Sciatic nerve (tissue), 2 donors: ENCODE measurements at regions of chr6 and their contacts with region 1.

Region 1: DNA sequence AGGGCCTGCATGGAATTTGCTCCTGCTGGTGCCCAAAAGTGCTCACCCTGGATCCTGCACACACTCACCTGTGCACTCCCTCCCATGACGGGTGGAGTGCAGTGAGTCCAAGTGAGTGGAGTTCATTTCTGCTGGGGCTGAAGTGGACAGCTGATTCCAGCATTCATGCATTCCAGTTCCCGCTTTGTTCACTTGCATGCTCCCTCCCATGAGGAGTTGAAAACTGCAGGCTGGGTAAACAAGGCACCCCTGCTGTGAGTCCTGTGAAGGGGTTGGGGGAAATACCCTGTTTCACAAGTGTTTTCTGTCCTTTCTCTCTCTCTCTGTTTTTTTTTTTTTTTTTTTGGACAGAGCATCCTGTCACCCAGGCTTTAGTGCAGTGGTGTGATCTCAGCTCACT is 454.1 kb upstream of the NOX3 start:
- DNase-seq: no peak
- ATAC-seq: no peak

Region 2: DNA sequence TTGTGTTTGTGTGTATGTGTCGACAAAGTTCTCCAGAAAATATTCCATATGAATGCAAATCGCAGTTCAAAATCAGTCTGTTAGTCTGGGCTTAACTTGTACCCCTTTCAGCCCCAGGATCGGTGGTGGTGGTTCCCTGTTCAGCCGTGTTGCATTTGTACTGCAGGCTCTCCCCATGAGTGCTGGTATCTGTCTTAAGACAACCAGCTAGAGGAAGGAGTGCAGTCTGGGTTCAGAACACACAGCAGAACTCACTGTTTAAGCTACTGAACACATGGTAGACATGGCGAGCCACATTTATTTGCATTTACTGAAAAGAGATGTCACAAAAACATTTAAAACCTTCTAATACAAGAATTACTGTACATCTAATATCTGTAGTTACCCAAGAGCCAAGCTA is 1059.5 kb after region 1 on chr6:
- intact Hi-C with region 1: loop called (anchors 5 kb)
- DNase-seq: no peak
- ATAC-seq: no peak